Activated naive CD8-positive, alpha-beta T cell treated with anti-CD3 and anti-CD28 coated beads, Interleukin-2, amount 10 ng/mL, durations not matched to agents 7 days and 5 days (primary cell): ENCODE measurements at regions of chr6 and their contacts with region 1.

Region 1: DNA sequence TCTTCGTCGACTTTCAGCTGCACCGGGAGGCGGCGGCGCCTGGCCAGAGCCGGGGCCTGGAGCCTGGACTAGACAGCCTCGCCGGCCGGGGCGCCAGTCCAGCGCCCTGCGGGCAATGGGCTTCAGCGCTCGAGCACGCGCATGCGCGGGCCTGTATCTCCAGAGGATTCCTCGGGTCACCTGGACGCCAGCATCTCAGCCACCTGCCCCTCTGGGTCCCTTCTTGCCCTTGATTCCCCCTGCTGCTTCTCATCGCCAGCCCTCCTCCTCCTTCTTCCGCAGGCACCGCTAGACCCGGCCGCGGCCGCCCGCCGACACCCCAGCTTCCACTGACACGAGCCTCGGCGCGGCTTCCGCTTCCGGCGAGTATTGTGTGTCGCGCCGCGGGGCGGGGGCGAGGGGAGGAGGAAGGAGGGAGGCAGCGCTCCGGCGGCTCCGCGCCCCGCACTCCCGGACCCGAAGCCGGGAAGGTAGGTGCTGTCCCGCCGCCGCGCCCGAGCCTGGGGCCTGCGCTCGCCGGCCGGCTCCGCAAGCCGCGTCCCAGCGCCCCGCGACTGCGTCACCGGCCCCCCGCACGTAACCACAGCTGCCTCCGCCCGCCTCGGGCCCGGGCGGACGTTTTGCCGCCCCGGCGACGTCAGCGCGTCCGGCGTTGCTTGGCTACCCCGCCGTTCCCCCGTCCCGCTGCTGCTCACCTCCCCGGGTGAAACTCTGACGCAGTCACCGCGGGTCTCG is at the start of gene TRIM39:
- DNase-seq: peak; percentile 94
- ATAC-seq: peak; percentile 73
- H3K4me3 Mint-ChIP-seq: peak within 1 kb of the TSS; percentile 94
- H3K27ac Mint-ChIP-seq: peak within 1 kb of the TSS; percentile 98
- H3K4me1 Mint-ChIP-seq: peaks cover 45% of the 10 kb centered on the region
- H3K27me3 Mint-ChIP-seq: no peaks in the 10 kb centered on the region
- total RNA-seq, gene TRIM39: 24.1 to 24.2 TPM

Region 2: DNA sequence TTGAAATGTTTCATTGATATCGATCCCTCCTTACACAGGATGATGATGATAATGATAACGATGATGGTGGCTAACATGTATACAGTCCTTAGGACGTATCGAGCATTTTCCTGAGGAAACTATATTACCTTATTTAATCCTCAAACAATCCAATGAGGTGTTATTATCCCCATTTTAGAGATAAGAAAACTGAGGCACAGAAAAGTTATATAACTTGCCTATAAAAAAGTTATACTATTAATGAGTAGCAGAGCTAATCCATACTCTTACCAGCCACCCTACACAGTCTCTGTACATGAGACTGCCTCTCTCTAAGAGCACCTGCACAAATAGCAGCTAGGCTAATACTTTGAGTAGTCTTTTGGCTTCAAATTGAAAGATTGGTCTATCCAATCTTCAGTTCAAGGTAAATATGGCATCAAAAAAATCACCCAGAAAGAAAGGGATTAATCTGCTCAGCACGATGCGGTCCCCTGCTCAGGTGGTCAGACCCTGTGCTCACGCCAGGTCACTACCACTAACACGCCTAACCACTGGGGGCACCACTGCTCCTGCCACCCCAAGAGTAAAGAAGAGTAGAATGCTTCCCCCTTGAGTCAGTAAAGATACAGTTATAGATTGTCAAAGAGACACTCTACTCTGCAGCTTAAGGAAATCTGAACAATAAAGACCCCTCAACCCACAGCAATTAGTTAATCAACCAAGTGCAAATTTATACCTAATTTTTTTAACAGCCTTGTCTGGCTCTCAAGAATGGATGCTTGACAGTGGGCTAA is 708.7 kb before region 1 on chr6:
- POLR2A ChIA-PET with region 1: no interaction called
- DNase-seq: no peak
- ATAC-seq: no peak
- H3K4me3 Mint-ChIP-seq: no peak overlapping the region
- H3K27ac Mint-ChIP-seq: no peak overlapping the region
- H3K4me1 Mint-ChIP-seq: no peaks in the 10 kb centered on the region
- H3K27me3 Mint-ChIP-seq: peaks cover 2% of the 10 kb centered on the region

Region 3: GRCh38 chr6:30066577-30067459 is 259.9 kb before region 1 on chr6 and contains the start of gene PPP1R11:
- POLR2A ChIA-PET with region 1: interaction called, 12 read pairs
- DNase-seq: peak; percentile 95
- ATAC-seq: peak; percentile 96
- H3K4me3 Mint-ChIP-seq: peak within 1 kb of the TSS; percentile 97
- H3K27ac Mint-ChIP-seq: peak within 1 kb of the TSS; percentile 97
- H3K4me1 Mint-ChIP-seq: peaks cover 43% of the 10 kb centered on the region
- H3K27me3 Mint-ChIP-seq: peaks cover 11% of the 10 kb centered on the region
- total RNA-seq, gene PPP1R11: 52.5 to 53.8 TPM

Region 4: GRCh38 chr6:30212865-30213666 is 113.6 kb before region 1 on chr6 and contains the start of gene TRIM26:
- POLR2A ChIA-PET with region 1: interaction called, 33 read pairs
- DNase-seq: peak; percentile 94
- ATAC-seq: peak; percentile 87
- H3K4me3 Mint-ChIP-seq: peak within 1 kb of the TSS; percentile 97
- H3K27ac Mint-ChIP-seq: peak within 1 kb of the TSS; percentile 99
- H3K4me1 Mint-ChIP-seq: peaks cover 43% of the 10 kb centered on the region
- H3K27me3 Mint-ChIP-seq: no peaks in the 10 kb centered on the region
- total RNA-seq, gene TRIM26: 75.5 to 79.3 TPM

Region 5: GRCh38 chr6:30344868-30345671 is 18.4 kb after region 1 on chr6 and contains the start of gene RPP21:
- POLR2A ChIA-PET with region 1: interaction called, 16 read pairs
- DNase-seq: peak; percentile 91
- ATAC-seq: peak; percentile 99
- H3K4me3 Mint-ChIP-seq: peak within 1 kb of the TSS; percentile 90
- H3K27ac Mint-ChIP-seq: peak within 1 kb of the TSS; percentile 87
- H3K4me1 Mint-ChIP-seq: peaks cover 17% of the 10 kb centered on the region
- H3K27me3 Mint-ChIP-seq: no peaks in the 10 kb centered on the region
- total RNA-seq, gene RPP21: 43.0 to 49.3 TPM